ENCODE measurements at regions of chr13 and their contacts with region 1.

Region 1: DNA sequence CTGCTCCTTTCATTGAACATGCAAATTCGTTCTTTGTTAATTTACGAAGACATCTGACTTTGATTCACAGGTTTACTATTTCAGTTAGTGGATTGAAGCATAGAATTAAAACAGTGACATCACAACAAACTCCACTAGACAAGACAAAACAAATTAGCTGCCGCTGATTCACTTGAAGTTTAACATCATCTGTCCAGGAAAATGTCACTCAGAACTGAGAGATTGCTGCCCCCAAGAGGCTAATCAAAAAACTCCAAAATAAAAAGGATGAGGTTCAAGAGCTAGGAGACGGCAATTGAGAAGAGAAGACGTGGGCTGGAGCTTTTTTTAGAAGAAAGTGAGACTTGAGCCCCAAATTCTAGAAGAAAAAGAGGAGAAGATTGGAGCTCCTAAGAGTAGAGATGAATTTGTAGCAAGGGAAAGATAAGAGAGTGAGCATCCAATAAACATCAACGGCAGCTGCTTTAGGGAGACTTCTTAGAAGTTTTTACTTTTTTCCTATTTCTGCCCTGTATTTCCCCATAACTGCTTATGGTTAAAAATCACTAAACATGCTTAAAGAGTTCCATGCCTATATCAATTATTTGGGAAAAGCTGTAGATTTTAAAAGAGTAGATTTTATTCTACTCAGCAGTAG is 40.8 kb upstream of the TPP2 start:
- DNase-seq: peak in 5 of 9 donors; percentile 19 to 35 (median 28)
- ATAC-seq: no peak
- H3K4me3 ChIP-seq: no peak overlapping the region
- H3K4me3 Mint-ChIP-seq: no peak overlapping the region
- H3K27ac ChIP-seq: no peak overlapping the region
- H3K27ac Mint-ChIP-seq: no peak overlapping the region
- H3K4me1 ChIP-seq: no peaks in the 10 kb centered on the region
- H3K4me1 Mint-ChIP-seq: peaks cover 0 to 5% (median 0%) of the 10 kb centered on the region in 7 donors
- H3K27me3 ChIP-seq: no peaks in the 10 kb centered on the region
- H3K27me3 Mint-ChIP-seq: peaks cover 0 to 11% (median 7%) of the 10 kb centered on the region in 5 donors

Region 2: DNA sequence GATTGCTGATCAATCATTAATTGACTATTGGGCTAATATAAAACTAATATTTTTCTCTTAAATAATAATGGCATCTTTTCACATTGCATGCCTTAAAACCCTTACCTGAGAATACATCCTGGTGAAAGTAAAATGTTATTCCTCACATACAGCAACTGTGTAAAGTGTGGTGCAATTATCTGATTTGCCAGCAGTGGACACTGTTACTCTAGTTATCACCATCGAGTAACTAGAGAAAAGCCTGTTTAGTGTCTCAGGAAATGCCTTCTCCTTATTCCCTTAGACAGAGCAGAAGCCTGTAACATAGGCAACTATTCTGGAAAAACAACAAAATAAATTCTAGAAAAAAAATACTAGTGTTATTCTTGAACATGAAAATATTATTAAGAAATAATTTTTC is 614.0 kb before region 1 on chr13:
- CTCF ChIA-PET with region 1: no interaction called
- POLR2A ChIA-PET with region 1: no interaction called
- intact Hi-C with region 1: loop called (anchors 5 to 10 kb)
- DNase-seq: no peak
- ATAC-seq: no peak
- H3K4me3 ChIP-seq: no peak overlapping the region
- H3K4me3 Mint-ChIP-seq: no peak overlapping the region
- H3K27ac ChIP-seq: no peak overlapping the region
- H3K27ac Mint-ChIP-seq: no peak overlapping the region
- H3K4me1 ChIP-seq: no peaks in the 10 kb centered on the region
- H3K4me1 Mint-ChIP-seq: no peaks in the 10 kb centered on the region
- H3K27me3 ChIP-seq: no peaks in the 10 kb centered on the region
- H3K27me3 Mint-ChIP-seq: peaks cover 2 to 36% (median 19%) of the 10 kb centered on the region in 5 donors

Region 3: GRCh38 chr13:102141625-102142472 is 414.2 kb before region 1 on chr13:
- CTCF ChIA-PET with region 1: interaction called, 3 read pairs
- POLR2A ChIA-PET with region 1: no interaction called
- intact Hi-C with region 1: loop called (anchors 1 to 5 kb)
- DNase-seq: no peak
- ATAC-seq: no peak
- H3K4me3 ChIP-seq: no peak overlapping the region
- H3K4me3 Mint-ChIP-seq: no peak overlapping the region
- H3K27ac ChIP-seq: no peak overlapping the region
- H3K27ac Mint-ChIP-seq: no peak overlapping the region
- H3K4me1 ChIP-seq: no peaks in the 10 kb centered on the region
- H3K4me1 Mint-ChIP-seq: peaks cover 0 to 1% (median 0%) of the 10 kb centered on the region in 7 donors
- H3K27me3 ChIP-seq: no peaks in the 10 kb centered on the region
- H3K27me3 Mint-ChIP-seq: peaks cover 0 to 12% (median 0%) of the 10 kb centered on the region in 5 donors

Region 4: GRCh38 chr13:103229674-103230073 is 673.6 kb after region 1 on chr13:
- CTCF ChIA-PET with region 1: no interaction called
- POLR2A ChIA-PET with region 1: no interaction called
- intact Hi-C with region 1: no loop called
- DNase-seq: no peak
- ATAC-seq: no peak
- H3K4me3 ChIP-seq: no peak overlapping the region
- H3K4me3 Mint-ChIP-seq: no peak overlapping the region
- H3K27ac ChIP-seq: no peak overlapping the region
- H3K27ac Mint-ChIP-seq: no peak overlapping the region
- H3K4me1 ChIP-seq: no peaks in the 10 kb centered on the region
- H3K4me1 Mint-ChIP-seq: no peaks in the 10 kb centered on the region
- H3K27me3 ChIP-seq: no peaks in the 10 kb centered on the region
- H3K27me3 Mint-ChIP-seq: no peaks in the 10 kb centered on the region